Vagina (tissue), 2 donors: ENCODE measurements at regions of chr1 and their contacts with region 1.

Region 1: GRCh38 chr1:179121159-179121938 is 39.5 kb downstream of the TOR3A start:
- DNase-seq: no peak
- H3K4me3 ChIP-seq: no peak overlapping the region
- H3K27ac ChIP-seq: no peak overlapping the region
- H3K4me1 ChIP-seq: peaks cover 21% of the 10 kb centered on the region
- H3K27me3 ChIP-seq: no peaks in the 10 kb centered on the region
- CTCF ChIP-seq: peak; percentile 8 to 51 (median 46)
- POLR2A ChIP-seq: no peak

Region 2: GRCh38 chr1:179175011-179175841 is 53.9 kb after region 1 on chr1:
- intact Hi-C with region 1: loop called (anchors 10 kb)
- DNase-seq: no peak
- H3K4me3 ChIP-seq: no peak overlapping the region
- H3K27ac ChIP-seq: peak overlapping the region; percentile 39
- H3K4me1 ChIP-seq: peaks cover 40% of the 10 kb centered on the region
- H3K27me3 ChIP-seq: no peaks in the 10 kb centered on the region
- CTCF ChIP-seq: no peak
- POLR2A ChIP-seq: no peak

Region 3: DNA sequence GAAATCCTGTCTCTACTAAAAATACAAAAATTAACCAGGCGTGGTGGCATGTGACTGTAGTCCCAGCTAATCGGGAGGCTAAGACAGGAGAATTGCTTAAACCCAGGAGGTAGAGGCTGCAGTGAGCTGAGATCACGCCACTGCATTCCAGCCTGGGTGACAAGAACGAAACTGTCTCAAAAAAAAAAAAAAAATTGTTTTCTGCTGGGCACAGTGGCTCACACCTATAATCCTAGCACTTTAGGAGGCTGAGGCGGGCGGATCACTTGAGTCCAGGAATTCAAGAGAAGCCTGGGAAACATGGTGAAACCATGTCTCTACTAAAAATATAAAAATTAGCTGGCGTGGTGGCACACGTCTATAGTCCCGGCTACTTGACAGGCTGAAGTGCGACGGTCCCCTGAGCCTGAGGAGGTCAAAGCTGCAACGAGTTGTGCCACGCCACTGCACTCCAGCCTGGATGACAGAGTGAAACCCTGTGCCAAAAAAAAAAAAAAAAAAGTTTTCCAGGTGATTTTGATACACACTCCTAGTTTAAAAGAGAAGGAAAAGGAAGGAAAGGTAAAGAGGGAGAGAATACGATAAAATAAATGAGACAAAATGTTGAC is 76.4 kb after region 1 on chr1:
- intact Hi-C with region 1: loop called (anchors 2 kb)
- DNase-seq: no peak
- H3K4me3 ChIP-seq: no peak overlapping the region
- H3K27ac ChIP-seq: no peak overlapping the region
- H3K4me1 ChIP-seq: no peaks in the 10 kb centered on the region
- H3K27me3 ChIP-seq: no peaks in the 10 kb centered on the region
- CTCF ChIP-seq: no peak
- POLR2A ChIP-seq: no peak

Region 4: GRCh38 chr1:179293340-179294327 is 172.3 kb after region 1 on chr1 and contains the start of gene SOAT1:
- intact Hi-C with region 1: loop called (anchors 10 kb)
- DNase-seq: peak in 1 of 2 donors; percentile 94
- H3K4me3 ChIP-seq: peak within 1 kb of the TSS; percentile 77 to 83
- H3K27ac ChIP-seq: peak within 1 kb of the TSS; percentile 94
- H3K4me1 ChIP-seq: peaks cover 12% of the 10 kb centered on the region
- H3K27me3 ChIP-seq: no peaks in the 10 kb centered on the region
- CTCF ChIP-seq: no peak
- POLR2A ChIP-seq: peak in 1 of 2 donors; percentile 71
- total RNA-seq, gene SOAT1: 10.3 TPM

Region 5: GRCh38 chr1:179322557-179322956 is 201.2 kb after region 1 on chr1:
- intact Hi-C with region 1: no loop called
- DNase-seq: no peak
- H3K4me3 ChIP-seq: no peak overlapping the region
- H3K27ac ChIP-seq: no peak overlapping the region
- H3K4me1 ChIP-seq: no peaks in the 10 kb centered on the region
- H3K27me3 ChIP-seq: no peaks in the 10 kb centered on the region
- CTCF ChIP-seq: no peak
- POLR2A ChIP-seq: no peak